ENCODE measurements at regions of chr6 and their contacts with region 1.

Region 1: DNA sequence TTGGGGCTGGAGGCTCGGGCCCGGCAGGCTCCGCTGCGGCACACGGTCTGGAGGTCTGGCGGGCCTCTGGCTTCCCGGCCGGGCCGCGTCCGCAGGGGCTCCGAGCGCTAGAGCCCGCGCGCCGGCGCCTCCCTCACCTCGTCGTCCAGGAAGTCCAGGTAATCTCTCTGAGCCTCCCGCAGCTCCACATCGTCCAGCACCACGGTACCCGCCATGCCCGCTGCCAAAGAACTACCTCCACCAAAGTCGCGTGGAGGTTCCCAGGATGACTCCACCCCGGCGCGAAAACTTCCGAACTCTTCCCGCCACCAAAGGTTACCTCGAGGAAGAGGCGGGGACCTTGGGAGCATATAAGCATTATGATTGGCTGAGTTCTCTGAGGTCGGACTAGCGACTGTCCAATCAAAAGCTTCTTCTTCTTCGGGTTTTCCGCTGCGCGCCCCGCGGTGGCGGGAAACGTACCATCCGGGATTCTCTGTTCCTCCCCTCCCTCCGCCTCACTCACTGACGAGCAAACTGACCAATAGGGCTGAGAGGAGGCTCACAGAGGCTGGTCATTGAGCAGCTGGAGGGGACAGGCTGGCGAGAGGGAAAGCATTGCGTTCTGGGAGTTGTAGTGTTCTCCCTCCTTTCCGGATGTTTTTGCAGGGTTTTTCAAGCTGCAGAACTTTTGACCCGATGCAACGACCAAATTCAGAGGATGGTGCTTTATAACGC is at the start of gene MCM3:
- DNase-seq: peak; percentile 98
- ATAC-seq: peak; percentile 97
- H3K4me3 ChIP-seq: peak within 1 kb of the TSS; percentile 67 to 83 (median 80)
- H3K4me3 Mint-ChIP-seq: peak within 1 kb of the TSS; percentile 72
- H3K27ac ChIP-seq: peak within 1 kb of the TSS; percentile 50 to 79
- H3K27ac Mint-ChIP-seq: no peak within 1 kb of the TSS
- H3K4me1 ChIP-seq: peaks cover 15 to 19% of the 10 kb centered on the region in 2 donors
- H3K4me1 Mint-ChIP-seq: peaks cover 22% of the 10 kb centered on the region
- H3K27me3 ChIP-seq: no peaks in the 10 kb centered on the region
- H3K27me3 Mint-ChIP-seq: no peaks in the 10 kb centered on the region
- CTCF ChIP-seq: peak; percentile 5
- total RNA-seq, gene MCM3: 58.5 and 60.0 TPM in 2 replicates

Region 2: DNA sequence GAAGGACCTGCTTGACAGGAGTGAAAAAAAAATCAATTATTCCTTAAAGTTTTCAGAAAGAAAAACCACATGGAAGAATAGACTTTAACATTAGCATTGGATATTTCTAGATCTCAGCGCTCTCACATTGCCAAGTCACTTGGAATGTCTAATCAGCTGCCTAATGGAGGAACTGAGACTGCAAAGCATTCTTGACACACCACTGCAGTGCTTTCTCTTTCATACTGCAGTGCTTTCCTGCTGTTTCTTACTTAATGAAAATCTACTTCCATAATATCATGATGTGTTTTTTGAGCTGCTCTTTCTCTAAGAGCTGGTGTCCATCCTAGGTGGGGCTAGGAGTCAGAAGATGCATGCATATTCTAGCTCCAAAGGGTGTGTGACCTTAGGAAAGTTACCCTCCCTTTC is 20.4 kb after region 1 on chr6:
- CTCF ChIA-PET with region 1: interaction called, 29 read pairs
- POLR2A ChIA-PET with region 1: interaction called, 4 read pairs
- intact Hi-C with region 1: loop called (anchors 1 kb)
- DNase-seq: peak; percentile 73
- ATAC-seq: peak; percentile 44
- H3K4me3 ChIP-seq: peak overlapping the region in 4 of 5 experiments; percentile 0 to 44 (median 20)
- H3K4me3 Mint-ChIP-seq: peak overlapping the region; percentile 80
- H3K27ac ChIP-seq: peak overlapping the region; percentile 92 to 94
- H3K27ac Mint-ChIP-seq: peak overlapping the region; percentile 93
- H3K4me1 ChIP-seq: peaks cover 59 to 65% of the 10 kb centered on the region in 2 donors
- H3K4me1 Mint-ChIP-seq: peaks cover 62% of the 10 kb centered on the region
- H3K27me3 ChIP-seq: no peaks in the 10 kb centered on the region
- H3K27me3 Mint-ChIP-seq: no peaks in the 10 kb centered on the region
- CTCF ChIP-seq: no peak

Region 3: DNA sequence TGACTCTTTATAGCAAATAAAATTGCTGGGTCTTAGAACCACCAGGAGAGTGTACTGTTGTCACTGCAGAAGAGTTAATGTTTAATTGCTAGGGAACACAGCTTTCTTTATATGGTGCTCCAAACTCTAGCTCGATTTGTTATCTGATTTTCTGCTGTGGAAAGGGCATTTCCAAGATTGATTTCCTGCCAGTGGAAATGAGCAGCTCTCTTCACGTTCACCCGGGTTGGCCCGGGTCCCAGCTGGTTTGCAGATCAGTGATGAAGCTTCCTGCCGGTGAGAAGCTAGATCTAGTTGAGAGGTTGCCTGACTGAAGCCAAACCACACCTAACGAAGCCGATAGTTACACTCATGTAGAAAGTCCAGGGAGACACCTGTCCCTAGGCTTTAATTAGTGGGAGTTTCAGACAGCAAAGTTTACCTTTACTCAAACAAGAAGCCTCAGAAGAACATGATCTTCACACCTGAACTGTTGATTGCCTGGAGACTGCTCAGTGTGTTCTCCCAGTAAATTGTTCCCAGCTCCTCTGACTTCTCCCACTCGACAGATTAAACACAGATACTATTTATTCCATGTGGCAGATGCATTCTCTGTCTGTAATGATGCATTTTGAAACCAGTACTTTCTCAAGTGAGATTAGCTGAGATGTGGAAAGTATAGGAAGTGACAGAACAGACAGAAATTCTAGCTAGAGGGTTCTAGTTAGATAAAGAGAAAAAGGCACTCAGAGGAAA is 105.2 kb after region 1 on chr6:
- CTCF ChIA-PET with region 1: interaction called, 36 read pairs
- POLR2A ChIA-PET with region 1: interaction called, 3 read pairs
- intact Hi-C with region 1: no loop called
- DNase-seq: peak; percentile 19
- ATAC-seq: peak; percentile 35
- H3K4me3 ChIP-seq: peak overlapping the region in 3 of 5 experiments; percentile 5 to 46 (median 21)
- H3K4me3 Mint-ChIP-seq: peak overlapping the region; percentile 66
- H3K27ac ChIP-seq: peak overlapping the region in 1 of 2 donors; percentile 24
- H3K27ac Mint-ChIP-seq: peak overlapping the region; percentile 79
- H3K4me1 ChIP-seq: peaks cover 16 to 23% of the 10 kb centered on the region in 2 donors
- H3K4me1 Mint-ChIP-seq: peaks cover 40% of the 10 kb centered on the region
- H3K27me3 ChIP-seq: no peaks in the 10 kb centered on the region
- H3K27me3 Mint-ChIP-seq: no peaks in the 10 kb centered on the region
- CTCF ChIP-seq: no peak

Region 4: DNA sequence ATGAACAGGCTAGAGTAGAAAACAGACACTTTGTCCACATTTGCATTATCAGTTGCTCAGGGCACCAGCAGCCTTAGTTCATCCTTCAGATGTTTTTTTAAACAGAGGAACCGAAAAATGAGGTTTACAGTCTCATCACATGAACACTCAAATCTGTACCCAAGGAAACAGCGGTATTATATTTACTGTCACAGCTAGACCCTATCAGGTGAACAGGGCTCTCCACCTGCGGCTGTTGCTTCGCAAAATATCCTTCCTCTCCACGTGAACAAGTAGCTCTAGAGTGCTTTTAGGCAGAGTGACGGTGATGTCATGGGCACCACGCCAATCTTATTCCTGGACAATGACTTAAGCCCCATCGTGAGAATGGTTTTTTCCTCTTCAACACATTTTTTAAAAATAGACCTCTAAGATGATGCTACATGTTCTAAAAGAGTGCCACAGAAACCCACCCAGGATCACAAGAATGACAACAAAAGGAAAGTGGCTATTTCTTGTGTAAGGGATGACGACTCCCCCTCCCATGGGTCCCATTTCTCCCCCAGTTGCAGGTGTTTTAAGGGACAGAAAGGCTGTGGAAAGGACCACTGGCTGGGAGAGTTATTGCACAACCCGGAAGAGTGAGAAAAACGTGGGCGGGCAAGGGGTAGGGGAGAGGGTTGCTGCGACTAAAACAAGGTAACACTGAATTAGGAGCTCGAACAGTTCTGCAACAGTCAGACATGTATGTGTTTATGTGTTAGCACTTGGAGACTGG is 213.2 kb after region 1 on chr6:
- CTCF ChIA-PET with region 1: interaction called, 3 read pairs
- POLR2A ChIA-PET with region 1: no interaction called
- intact Hi-C with region 1: loop called (anchors 5 kb)
- DNase-seq: peak; percentile 89
- ATAC-seq: peak; percentile 79
- H3K4me3 ChIP-seq: peak overlapping the region in 3 of 5 experiments; percentile 3 to 19 (median 7)
- H3K4me3 Mint-ChIP-seq: peak overlapping the region; percentile 76
- H3K27ac ChIP-seq: peak overlapping the region; percentile 96 to 99
- H3K27ac Mint-ChIP-seq: peak overlapping the region; percentile 96
- H3K4me1 ChIP-seq: peaks cover 43 to 61% of the 10 kb centered on the region in 2 donors
- H3K4me1 Mint-ChIP-seq: peaks cover 66% of the 10 kb centered on the region
- H3K27me3 ChIP-seq: no peaks in the 10 kb centered on the region
- H3K27me3 Mint-ChIP-seq: no peaks in the 10 kb centered on the region
- CTCF ChIP-seq: no peak

Region 5: GRCh38 chr6:52670502-52671409 is 386.1 kb after region 1 on chr6 and contains the start of gene TMEM14A:
- CTCF ChIA-PET with region 1: interaction called, 8 read pairs
- POLR2A ChIA-PET with region 1: no interaction called
- intact Hi-C with region 1: loop called (anchors 1 kb)
- DNase-seq: peak; percentile 92
- ATAC-seq: peak; percentile 98
- H3K4me3 ChIP-seq: peak within 1 kb of the TSS; percentile 59 to 86 (median 67)
- H3K4me3 Mint-ChIP-seq: peak within 1 kb of the TSS; percentile 91
- H3K27ac ChIP-seq: no peak within 1 kb of the TSS
- H3K27ac Mint-ChIP-seq: peak within 1 kb of the TSS; percentile 81
- H3K4me1 ChIP-seq: peaks cover 20 to 23% of the 10 kb centered on the region in 2 donors
- H3K4me1 Mint-ChIP-seq: peaks cover 40% of the 10 kb centered on the region
- H3K27me3 ChIP-seq: no peaks in the 10 kb centered on the region
- H3K27me3 Mint-ChIP-seq: no peaks in the 10 kb centered on the region
- CTCF ChIP-seq: no peak
- total RNA-seq, gene TMEM14A: 5.9 and 9.5 TPM in 2 replicates

Region 6: GRCh38 chr6:53544470-53545308 is 1260.1 kb after region 1 on chr6 and contains the start of gene GCLC:
- CTCF ChIA-PET with region 1: no interaction called
- POLR2A ChIA-PET with region 1: no interaction called
- intact Hi-C with region 1: loop called (anchors 10 kb)
- DNase-seq: peak; percentile 95
- ATAC-seq: peak; percentile 67
- H3K4me3 ChIP-seq: peak within 1 kb of the TSS; percentile 45 to 81 (median 69)
- H3K4me3 Mint-ChIP-seq: peak within 1 kb of the TSS; percentile 97
- H3K27ac ChIP-seq: peak within 1 kb of the TSS in 1 of 2 donors; percentile 68
- H3K27ac Mint-ChIP-seq: peak within 1 kb of the TSS; percentile 93
- H3K4me1 ChIP-seq: peaks cover 22 to 32% of the 10 kb centered on the region in 2 donors
- H3K4me1 Mint-ChIP-seq: peaks cover 52% of the 10 kb centered on the region
- H3K27me3 ChIP-seq: no peaks in the 10 kb centered on the region
- H3K27me3 Mint-ChIP-seq: no peaks in the 10 kb centered on the region
- CTCF ChIP-seq: peak; percentile 81
- total RNA-seq, gene GCLC: 25.8 and 37.8 TPM in 2 replicates

Region 7: DNA sequence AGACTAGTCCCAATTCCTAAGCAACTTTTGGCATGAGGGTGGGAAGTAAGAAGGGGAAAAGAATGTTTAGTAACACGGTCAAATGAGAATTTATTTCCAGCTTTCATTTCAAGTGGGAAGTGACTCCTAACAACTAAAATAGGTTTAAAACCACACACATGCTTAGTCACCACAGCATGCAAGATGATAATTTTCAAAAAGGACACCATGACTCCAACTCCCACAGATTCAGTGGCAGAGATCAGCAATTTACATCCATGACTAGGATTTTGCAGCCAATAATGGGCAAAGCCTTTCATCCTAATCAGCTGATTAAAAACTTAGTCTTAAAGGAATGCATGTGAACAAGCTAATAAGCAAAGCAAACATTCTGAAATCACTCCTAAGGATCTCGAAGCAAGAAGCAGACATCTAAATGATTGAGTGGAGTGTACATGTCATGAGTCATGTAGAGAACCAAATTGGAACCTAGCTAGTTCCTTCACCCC is 1308.4 kb after region 1 on chr6:
- CTCF ChIA-PET with region 1: no interaction called
- POLR2A ChIA-PET with region 1: no interaction called
- intact Hi-C with region 1: no loop called
- DNase-seq: no peak
- ATAC-seq: no peak
- H3K4me3 ChIP-seq: no peak overlapping the region
- H3K4me3 Mint-ChIP-seq: no peak overlapping the region
- H3K27ac ChIP-seq: no peak overlapping the region
- H3K27ac Mint-ChIP-seq: no peak overlapping the region
- H3K4me1 ChIP-seq: no peaks in the 10 kb centered on the region
- H3K4me1 Mint-ChIP-seq: no peaks in the 10 kb centered on the region
- H3K27me3 ChIP-seq: peaks cover 0 to 7% (median 2%) of the 10 kb centered on the region in 4 experiments
- H3K27me3 Mint-ChIP-seq: peaks cover 3% of the 10 kb centered on the region
- CTCF ChIP-seq: no peak

Measured in B cell (primary cell).